ENCODE measurements at regions of chr11 and their contacts with region 1.

Region 1: GRCh38 chr11:65711785-65712632 is at the start of gene KAT5:
- DNase-seq: peak; percentile 99
- ATAC-seq: peak; percentile 92
- total RNA-seq, gene KAT5: 44.6 TPM

Region 2: DNA sequence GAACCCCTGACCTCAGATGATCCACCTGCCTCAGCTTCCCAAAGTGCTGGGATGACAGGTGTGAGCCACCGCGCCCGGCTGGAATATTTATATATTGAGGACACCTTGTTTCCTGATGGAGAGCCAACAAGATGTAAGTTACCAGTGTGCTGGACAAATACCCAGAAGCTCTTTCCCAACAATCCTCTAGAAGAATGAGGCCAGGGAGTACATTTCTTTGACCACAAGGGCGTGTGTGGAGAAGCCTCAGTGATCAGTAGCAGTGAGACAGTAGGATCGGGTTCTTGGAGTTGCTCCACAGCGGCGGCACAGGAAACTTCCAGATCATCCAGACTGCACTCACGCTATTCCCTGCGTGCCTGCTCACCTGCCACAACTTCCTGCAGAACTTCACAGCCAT is 460.5 kb before region 1 on chr11:
- intact Hi-C with region 1: no loop called
- DNase-seq: no peak
- ATAC-seq: no peak

Region 3: GRCh38 chr11:65290448-65291165 is 421.4 kb before region 1 on chr11:
- intact Hi-C with region 1: no loop called
- DNase-seq: peak; percentile 96
- ATAC-seq: peak; percentile 86

Region 4: GRCh38 chr11:65301491-65302329 is 410.3 kb before region 1 on chr11:
- intact Hi-C with region 1: no loop called
- DNase-seq: peak; percentile 81
- ATAC-seq: peak; percentile 61

Region 5: GRCh38 chr11:65662799-65663638 is 49.0 kb before region 1 on chr11 and contains the start of gene RELA:
- intact Hi-C with region 1: loop called (anchors 5 kb)
- DNase-seq: peak; percentile 96
- ATAC-seq: peak; percentile 92
- total RNA-seq, gene RELA: 36.7 TPM

Region 6: DNA sequence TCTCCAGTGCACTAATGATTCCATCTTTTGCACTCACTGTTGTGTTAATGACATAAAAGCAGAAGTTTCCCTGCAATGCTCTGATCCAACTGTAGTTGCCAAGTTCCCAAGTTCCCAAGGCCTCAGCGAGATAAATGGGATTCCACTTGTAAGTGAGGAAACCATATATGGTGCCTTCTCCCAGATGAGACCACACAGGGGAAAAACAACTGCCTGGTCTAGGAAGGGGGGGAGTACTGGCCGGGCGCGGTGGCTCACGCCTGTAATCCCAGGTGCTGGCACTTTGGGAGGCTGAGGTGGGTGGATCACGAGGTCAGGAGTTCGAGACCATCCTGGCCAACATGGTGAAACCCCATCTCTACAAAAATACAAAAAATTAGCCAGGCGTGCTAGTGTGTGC is 26.0 kb before region 1 on chr11:
- intact Hi-C with region 1: no loop called
- DNase-seq: no peak
- ATAC-seq: peak; percentile 60

Region 7: DNA sequence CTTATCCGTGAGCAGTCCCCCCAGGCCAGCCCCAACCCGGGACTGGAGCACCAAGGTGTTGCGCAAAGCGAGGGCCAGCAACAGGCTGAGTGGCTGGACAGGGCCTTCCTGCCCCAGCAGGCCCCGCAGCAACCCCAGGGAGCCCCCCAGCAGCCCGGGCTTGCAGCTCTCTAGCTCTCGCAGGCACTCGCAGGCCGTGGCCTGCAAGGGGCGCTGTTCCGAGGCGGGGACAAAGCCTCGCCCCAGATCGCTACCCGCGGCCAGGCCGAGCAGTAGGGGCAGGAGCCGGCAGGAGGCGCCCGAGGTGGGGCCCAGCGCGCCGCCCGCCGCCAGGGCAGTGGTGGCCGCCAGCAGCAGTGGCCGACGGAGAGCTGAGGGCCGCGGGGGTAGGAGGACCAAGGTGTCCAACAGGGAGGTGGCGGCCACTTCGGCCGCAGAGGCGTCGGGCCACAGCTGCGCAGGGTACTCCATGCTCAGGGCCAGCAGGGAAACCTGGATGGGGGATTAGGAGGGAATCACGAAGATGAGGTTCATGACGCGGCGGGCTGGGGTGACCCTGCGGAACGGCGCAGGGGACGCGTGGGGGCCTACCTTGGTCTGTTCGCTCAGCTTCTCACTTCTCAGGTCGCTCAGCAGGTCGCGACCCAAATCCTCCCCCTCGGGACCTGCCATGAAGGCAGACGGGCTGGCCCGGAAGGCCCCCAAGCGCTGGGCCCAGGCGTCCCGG is 68.0 kb after region 1 on chr11:
- intact Hi-C with region 1: loop called (anchors 5 kb)
- DNase-seq: peak; percentile 92
- ATAC-seq: peak; percentile 89

Region 8: DNA sequence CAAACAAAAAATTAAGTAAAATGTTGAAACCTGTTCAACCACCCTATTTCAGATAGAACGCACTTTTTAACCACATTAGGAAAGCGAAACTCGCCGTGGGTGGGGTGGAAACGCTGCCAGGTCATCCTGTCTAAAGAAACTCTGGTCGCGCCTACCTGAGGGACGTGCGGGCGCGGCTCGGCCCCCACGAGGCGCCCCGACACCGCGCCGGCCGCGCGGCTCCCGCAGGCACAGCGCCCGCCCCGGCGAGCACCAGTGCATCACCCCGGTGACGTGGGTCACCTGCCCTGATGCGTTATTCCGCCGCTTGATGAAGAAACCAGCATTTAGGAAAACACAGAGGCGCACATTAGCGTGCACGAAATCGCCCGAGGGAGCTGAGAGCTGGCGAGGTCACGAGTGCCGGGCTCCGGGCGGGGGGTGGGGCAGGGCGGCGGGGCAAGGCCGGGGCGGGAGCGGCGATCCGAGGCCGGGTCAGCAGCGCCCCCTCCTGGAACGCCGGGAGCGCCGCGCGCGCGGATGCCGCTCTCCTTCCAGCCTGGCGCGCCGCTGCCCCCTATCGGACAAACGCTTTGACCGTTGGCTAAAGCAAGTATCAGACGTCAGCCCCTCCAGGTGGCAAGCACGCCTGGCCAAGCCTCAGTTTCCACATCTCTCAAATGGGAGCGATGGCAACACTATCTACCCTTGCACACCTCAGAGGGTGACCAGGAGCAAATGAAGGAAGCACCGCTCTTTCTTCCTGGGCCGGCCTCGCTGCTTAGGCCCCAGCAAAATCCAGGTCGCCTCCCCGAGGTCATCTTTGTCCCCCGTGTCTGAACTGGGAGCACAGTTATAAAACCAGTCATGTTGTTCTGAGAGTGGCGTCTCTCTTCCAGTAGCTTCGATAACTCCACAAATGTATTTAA is 106.1 kb after region 1 on chr11:
- intact Hi-C with region 1: loop called (anchors 2 kb)
- DNase-seq: peak; percentile 98
- ATAC-seq: peak; percentile 98

Region 9: GRCh38 chr11:65988791-65989592 is 277.0 kb after region 1 on chr11:
- intact Hi-C with region 1: loop called (anchors 2 kb)
- DNase-seq: peak; percentile 81
- ATAC-seq: peak; percentile 99